Dorsolateral prefrontal cortex (tissue), 120 donors: ENCODE measurements at regions of chr1 and their contacts with region 1.

Region 1: DNA sequence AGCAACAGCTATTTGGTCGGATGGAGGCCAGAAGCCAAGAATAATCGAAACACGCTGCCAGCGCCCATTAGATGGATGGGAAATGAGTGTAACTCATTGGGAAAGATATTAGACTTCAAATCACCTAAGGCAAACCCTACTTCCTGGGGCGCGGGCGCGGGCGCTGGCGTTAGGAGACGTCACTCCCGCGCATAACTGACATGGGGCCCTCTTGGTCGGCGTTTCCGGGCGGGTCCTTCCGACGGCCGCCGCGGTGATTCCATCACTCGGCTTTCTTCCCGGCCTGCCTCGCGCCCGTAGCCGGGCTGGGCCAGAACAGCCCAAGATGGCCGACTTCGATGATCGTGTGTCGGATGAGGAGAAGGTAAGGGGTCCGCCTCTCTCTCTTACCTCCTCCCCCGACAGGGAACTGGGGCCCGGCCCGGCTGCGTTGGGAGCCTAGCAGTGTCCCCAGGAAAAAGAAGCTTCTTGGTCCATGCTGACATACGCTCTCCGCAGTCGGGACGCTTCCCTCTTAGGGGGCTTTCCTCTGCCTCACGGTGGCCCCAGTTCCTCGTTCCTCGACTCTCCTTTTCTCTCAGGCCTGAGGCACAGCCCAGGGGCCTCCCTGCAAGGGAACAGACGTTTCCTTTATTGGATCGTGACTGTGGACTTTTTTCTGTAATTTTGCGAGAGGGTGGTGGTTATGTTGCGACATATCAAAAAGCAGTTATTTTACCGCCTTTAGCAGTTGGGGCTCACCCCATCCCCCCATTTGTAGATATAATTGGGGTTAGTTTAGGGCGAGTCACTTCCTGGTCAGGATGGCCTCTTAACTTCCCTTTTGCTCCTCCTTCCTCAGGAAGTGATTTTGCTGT is at the start of gene CAPZA1:
- DNase-seq: peak; percentile 85 to 95 (median 90)
- H3K4me3 ChIP-seq: peak within 1 kb of the TSS; percentile 69 to 100 (median 94)
- H3K27ac ChIP-seq: peak within 1 kb of the TSS; percentile 93 to 99 (median 98)
- H3K27me3 ChIP-seq: no peaks in the 10 kb centered on the region
- CTCF ChIP-seq: peak in 29 of 56 donors; percentile 7 to 43 (median 23)
- total RNA-seq, gene CAPZA1: 42.9 to 101 (median 68.4) TPM

Region 2: DNA sequence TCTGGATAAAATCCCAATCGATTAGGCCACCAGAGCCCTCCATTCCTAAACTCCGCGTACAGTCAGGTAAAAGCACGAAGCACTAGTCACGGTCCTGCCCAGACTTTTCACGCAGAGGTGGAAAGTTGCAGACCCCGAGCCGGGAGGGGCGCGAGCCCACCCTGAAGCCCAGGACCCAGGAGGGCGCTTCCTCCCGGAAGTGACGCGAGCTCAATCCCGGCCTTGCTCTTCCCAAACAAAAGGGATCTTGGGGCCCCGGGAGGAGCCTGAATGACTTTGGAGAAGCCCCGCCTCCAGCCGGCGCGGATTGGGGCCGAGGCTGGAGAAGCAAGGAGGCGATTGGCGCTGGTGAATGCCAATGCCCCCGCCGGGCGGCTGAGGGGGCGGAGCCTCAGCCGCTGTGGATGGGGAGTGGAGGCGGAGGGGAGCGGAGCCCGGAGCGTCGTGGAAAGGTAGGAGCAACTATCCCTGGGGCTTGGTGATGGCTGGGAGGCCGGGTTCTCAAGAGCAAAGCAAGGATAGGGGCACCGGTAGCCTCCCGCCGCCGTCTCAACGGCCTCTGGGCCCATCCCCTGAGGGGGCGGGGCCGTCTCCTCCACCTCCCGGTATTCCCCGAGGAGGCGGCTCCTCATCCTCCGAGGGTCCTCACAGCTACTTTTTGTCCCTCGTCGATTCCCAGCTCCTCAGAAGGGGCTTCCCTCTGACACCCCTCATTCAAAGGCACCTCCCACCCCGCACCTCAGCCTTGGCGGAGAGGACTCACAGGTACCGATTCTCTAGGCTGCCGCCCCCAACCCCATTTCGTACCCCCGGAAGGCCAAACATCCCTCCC is 223.7 kb before region 1 on chr1 and contains the start of gene CTTNBP2NL:
- intact Hi-C with region 1: loop called (anchors 1 to 2 kb)
- DNase-seq: peak; percentile 92 to 98 (median 98)
- H3K4me3 ChIP-seq: peak within 1 kb of the TSS; percentile 72 to 100 (median 95)
- H3K27ac ChIP-seq: peak within 1 kb of the TSS; percentile 3 to 98 (median 88)
- H3K27me3 ChIP-seq: no peaks in the 10 kb centered on the region
- CTCF ChIP-seq: peak in 36 of 56 donors; percentile 9 to 61 (median 32)
- total RNA-seq, gene CTTNBP2NL: 24.0 to 48.1 (median 32.7) TPM

Region 3: DNA sequence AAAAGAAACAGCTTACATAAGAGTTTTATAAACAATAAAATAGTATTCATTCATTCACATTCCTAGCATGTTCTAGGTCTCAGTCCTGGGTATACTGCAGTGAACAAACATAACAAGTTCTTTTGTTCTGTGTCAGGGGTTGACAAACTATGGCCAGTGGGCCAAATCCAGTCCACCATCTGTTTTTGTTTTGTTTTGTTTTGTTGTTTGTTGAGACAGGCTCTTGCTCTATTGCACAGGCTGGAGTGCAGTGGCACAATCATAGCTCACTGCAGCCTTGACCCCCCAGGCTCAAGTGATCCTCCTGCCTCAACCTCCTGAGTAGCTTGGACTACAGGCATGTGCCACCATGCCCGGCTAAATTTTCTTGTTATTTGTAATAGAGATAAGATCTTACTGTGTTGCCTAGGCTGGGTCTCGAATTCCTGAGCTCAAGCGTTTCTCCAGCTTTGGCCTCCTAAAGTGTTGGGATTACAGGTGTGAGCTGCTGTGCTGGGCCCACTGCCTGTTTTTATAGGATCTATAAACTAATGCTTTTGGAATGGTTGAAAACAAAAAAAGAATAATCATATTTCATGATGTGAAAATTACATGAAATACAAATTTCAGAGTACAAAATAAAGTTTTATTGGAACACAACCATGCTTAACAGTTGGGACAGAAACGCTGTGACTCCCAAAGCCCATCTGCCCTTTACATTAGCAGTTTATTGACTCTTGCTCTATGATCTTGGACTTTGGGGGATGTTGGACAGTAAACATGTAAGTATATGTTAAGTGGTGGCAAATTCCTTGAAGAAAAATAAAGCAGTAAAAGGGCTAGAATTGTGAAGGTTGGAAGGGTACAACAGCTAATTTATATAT is 17.7 kb after region 1 on chr1:
- intact Hi-C with region 1: loop called in 1 of 2 experiments (anchors 1 kb)
- DNase-seq: peak in 2 of 10 donors; percentile 37 to 57
- H3K4me3 ChIP-seq: peak overlapping the region in 3 of 59 donors; percentile 2 to 7 (median 5)
- H3K27ac ChIP-seq: peak overlapping the region; percentile 20 to 91 (median 78)
- H3K27me3 ChIP-seq: no peaks in the 10 kb centered on the region
- CTCF ChIP-seq: peak in 1 of 56 donors; percentile 9

Region 4: GRCh38 chr1:112674439-112674985 is 54.8 kb after region 1 on chr1 and contains the start of gene MOV10:
- intact Hi-C with region 1: loop called (anchors 2 kb)
- DNase-seq: peak in 7 of 10 donors; percentile 38 to 75 (median 52)
- H3K4me3 ChIP-seq: peak within 1 kb of the TSS; percentile 56 to 97 (median 83)
- H3K27ac ChIP-seq: peak within 1 kb of the TSS in 58 of 59 donors; percentile 34 to 95 (median 87)
- H3K27me3 ChIP-seq: no peaks in the 10 kb centered on the region
- CTCF ChIP-seq: peak in 1 of 56 donors; percentile 7
- total RNA-seq, gene MOV10: 12.5 to 54.5 (median 25.7) TPM